Heart left ventricle (tissue), 16 donors: ENCODE measurements at regions of chr11 and their contacts with region 1.

Region 1: DNA sequence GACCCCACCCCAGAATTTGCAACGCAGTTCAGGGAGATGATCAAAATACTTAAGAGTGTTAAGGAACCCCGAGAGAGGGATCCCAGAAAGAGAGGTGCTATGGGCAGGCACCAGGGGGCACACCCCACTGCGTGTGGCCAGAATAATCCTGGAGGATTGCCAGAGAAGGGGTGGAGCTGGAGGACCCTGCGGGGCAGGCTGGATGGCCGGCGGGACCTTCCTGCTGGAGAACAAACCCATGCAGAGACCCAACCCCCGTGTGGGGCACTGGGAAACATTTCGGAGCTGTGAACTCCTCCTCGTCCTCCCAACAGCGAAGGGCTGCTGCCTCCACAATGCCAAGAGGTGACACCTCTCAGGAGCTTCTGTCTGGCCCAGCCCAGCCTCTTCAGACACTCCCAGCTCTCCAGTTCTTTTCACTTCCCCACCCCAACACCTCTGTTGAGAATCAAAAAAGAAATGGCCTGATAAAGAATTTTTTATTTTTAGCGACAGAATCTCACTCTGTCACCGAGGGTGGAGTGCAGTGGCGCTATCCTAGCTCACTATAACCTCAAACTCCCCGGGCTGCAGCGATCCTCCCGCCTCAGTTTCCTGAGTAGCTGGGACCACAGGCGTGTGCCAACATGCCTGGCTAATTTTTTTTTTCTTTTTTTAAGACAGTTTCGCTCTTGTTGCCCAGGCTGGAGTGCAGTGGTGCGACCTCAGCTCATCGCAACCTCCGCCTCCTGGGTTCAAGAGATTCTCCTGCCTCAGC is 25.6 kb downstream of the RHOD start:
- DNase-seq: peak in 1 of 5 donors; percentile 68
- ATAC-seq: peak in 3 of 4 donors; percentile 10 to 59 (median 36)
- H3K4me3 ChIP-seq: peak overlapping the region in 10 of 12 donors; percentile 10 to 36 (median 24)
- H3K27ac ChIP-seq: no peak overlapping the region
- H3K4me1 ChIP-seq: peaks cover 0 to 12% (median 10%) of the 10 kb centered on the region in 12 donors
- H3K27me3 ChIP-seq: peaks cover 0 to 3% (median 0%) of the 10 kb centered on the region in 9 donors
- CTCF ChIP-seq: no peak
- POLR2A ChIP-seq: no peak

Region 2: GRCh38 chr11:67032830-67033555 is 49.2 kb before region 1 on chr11:
- intact Hi-C with region 1: no loop called
- DNase-seq: no peak
- ATAC-seq: peak in 3 of 4 donors; percentile 39 to 78 (median 72)
- H3K4me3 ChIP-seq: no peak overlapping the region
- H3K27ac ChIP-seq: no peak overlapping the region
- H3K4me1 ChIP-seq: peaks cover 0 to 11% (median 0%) of the 10 kb centered on the region in 12 donors
- H3K27me3 ChIP-seq: peaks cover 0 to 4% (median 0%) of the 10 kb centered on the region in 9 donors
- CTCF ChIP-seq: no peak
- POLR2A ChIP-seq: no peak

Region 3: GRCh38 chr11:67099831-67100324 is 17.7 kb after region 1 on chr11:
- intact Hi-C with region 1: no loop called
- DNase-seq: no peak
- ATAC-seq: no peak
- H3K4me3 ChIP-seq: no peak overlapping the region
- H3K27ac ChIP-seq: no peak overlapping the region
- H3K4me1 ChIP-seq: peaks cover 0 to 4% (median 0%) of the 10 kb centered on the region in 12 donors
- H3K27me3 ChIP-seq: no peaks in the 10 kb centered on the region
- CTCF ChIP-seq: no peak
- POLR2A ChIP-seq: no peak

Region 4: DNA sequence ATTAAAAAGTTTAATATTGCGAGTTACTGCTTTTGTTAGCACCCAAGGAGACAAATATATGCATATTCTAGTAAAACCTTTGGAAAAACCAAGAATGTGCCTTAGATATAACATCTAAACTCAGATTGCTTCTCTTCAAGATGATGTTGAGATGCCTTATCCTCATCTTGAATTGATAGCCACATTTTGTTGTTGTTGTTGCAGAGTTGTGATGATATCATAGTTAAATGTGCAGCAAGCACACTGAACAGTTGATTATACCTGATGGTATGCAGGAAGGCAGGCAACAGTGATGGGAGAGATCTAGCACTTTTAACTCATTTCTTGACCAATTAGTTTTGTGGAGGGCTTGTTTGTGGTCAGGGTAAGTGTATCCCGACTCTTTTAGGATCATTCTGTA is 84.9 kb after region 1 on chr11:
- intact Hi-C with region 1: loop called in 9 of 10 experiments (anchors 1 to 5 kb)
- DNase-seq: no peak
- ATAC-seq: no peak
- H3K4me3 ChIP-seq: no peak overlapping the region
- H3K27ac ChIP-seq: no peak overlapping the region
- H3K4me1 ChIP-seq: peaks cover 0 to 32% (median 11%) of the 10 kb centered on the region in 12 donors
- H3K27me3 ChIP-seq: no peaks in the 10 kb centered on the region
- CTCF ChIP-seq: no peak
- POLR2A ChIP-seq: no peak

Region 5: DNA sequence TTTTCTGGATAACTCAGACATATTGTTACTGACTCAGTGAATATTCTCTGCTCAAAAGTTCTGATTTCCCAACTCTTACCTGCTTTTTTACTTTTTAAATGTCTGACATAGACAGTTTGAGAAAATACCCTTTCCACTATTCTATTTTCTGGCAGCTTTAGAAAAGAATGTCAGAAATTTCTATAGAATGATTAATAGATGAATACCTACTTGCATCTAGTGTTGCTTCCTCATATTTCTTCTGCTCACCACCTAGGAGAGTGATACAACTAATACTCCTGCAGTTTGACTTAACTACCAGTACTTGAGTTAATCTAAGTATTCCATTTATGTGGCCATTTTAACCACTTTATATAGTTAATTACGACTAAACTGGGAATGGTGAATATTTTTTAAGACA is 92.1 kb after region 1 on chr11:
- intact Hi-C with region 1: loop called in 5 of 10 experiments (anchors 5 kb)
- DNase-seq: no peak
- ATAC-seq: no peak
- H3K4me3 ChIP-seq: no peak overlapping the region
- H3K27ac ChIP-seq: no peak overlapping the region
- H3K4me1 ChIP-seq: peaks cover 0 to 31% (median 8%) of the 10 kb centered on the region in 12 donors
- H3K27me3 ChIP-seq: no peaks in the 10 kb centered on the region
- CTCF ChIP-seq: no peak
- POLR2A ChIP-seq: no peak

Region 6: DNA sequence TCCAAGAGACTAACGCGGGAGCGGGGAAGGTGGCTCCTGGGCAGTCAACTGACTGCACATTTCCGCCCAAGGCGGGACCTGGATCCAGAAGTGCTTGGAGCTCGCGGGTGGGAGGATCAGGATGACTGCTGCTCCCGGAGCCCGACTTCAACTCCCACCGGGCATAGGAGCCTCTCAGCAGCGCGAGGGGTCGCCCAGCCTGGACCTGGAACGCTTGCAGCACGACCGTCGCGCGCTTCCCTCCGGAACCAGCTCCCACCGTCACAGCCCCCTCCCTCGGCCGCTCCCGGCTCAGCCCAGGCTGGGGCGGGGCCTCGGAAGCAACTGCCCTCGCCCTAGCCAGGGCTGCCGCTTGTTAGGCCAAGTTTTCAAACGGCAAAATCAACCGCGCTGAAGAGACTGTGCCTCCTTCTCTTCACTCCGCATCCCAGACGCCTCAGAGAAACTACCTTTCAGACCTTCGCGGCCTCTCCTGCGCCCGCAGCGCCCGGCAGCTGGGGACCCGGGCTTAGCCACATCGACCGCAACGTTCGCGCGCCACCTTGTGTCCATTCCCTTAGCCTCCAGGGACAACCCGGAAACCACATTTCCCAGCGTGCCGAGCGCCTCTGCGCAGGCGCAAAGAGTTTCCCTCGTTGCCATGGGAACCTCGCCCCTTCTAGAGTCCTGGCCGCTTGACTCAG is 235.1 kb after region 1 on chr11:
- intact Hi-C with region 1: loop called in 6 of 10 experiments (anchors 2 to 10 kb)
- DNase-seq: peak; percentile 94 to 98 (median 96)
- ATAC-seq: peak; percentile 92 to 96 (median 94)
- H3K4me3 ChIP-seq: peak overlapping the region; percentile 69 to 97 (median 84)
- H3K27ac ChIP-seq: peak overlapping the region; percentile 68 to 98 (median 95)
- H3K4me1 ChIP-seq: peaks cover 0 to 26% (median 12%) of the 10 kb centered on the region in 12 donors
- H3K27me3 ChIP-seq: no peaks in the 10 kb centered on the region
- CTCF ChIP-seq: peak; percentile 86 to 99 (median 97)
- POLR2A ChIP-seq: peak in 1 of 2 donors; percentile 63

Region 7: DNA sequence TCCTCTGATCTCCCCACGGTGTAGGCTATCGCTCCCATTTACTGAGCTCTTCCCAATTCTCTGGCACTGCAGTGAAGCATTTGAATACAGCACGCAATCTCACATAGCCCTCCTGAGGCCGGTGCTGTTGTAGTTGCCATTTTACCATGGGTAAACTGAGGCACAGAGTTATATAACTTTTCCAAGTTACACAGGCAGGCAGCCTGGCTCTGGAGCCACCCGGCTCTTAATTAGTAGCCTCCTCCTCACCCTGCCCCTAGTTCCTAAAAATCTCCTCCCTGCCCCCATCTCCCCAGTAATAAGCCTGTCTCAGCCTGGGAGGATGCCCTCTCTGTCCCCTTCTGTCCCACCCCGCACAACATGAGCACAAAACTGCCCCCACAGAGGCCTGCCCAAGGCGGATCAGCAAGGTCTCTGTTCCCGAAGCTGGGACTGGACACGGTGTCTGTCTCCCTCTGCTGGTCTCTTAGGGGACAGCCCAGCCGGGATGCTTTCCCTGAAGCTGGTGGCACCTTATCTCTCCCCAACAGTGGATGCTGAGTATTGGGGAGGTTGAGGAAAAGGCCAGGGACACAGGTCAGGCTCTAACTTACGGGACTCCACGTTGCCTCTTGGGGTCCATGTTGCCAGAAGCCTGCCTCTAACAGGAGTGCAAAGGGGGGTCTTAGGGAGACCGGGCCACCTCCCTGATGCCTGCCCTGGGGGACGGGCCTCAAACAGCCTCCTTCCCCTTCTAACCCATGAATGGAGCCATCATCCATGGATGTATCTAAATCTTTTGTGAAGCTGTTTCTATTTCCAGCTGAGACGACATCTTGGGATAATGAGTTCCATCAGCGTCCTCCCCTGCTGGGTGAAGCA is 300.3 kb after region 1 on chr11:
- intact Hi-C with region 1: loop called in 2 of 10 experiments (anchors 2 to 5 kb)
- DNase-seq: peak; percentile 76 to 87 (median 80)
- ATAC-seq: peak; percentile 72 to 88 (median 88)
- H3K4me3 ChIP-seq: no peak overlapping the region
- H3K27ac ChIP-seq: no peak overlapping the region
- H3K4me1 ChIP-seq: peaks cover 0 to 27% (median 5%) of the 10 kb centered on the region in 12 donors
- H3K27me3 ChIP-seq: no peaks in the 10 kb centered on the region
- CTCF ChIP-seq: peak; percentile 92 to 99 (median 96)
- POLR2A ChIP-seq: no peak